CD4-positive, alpha-beta T cell (primary cell): ENCODE measurements at regions of chr1 and their contacts with region 1.

Region 1: DNA sequence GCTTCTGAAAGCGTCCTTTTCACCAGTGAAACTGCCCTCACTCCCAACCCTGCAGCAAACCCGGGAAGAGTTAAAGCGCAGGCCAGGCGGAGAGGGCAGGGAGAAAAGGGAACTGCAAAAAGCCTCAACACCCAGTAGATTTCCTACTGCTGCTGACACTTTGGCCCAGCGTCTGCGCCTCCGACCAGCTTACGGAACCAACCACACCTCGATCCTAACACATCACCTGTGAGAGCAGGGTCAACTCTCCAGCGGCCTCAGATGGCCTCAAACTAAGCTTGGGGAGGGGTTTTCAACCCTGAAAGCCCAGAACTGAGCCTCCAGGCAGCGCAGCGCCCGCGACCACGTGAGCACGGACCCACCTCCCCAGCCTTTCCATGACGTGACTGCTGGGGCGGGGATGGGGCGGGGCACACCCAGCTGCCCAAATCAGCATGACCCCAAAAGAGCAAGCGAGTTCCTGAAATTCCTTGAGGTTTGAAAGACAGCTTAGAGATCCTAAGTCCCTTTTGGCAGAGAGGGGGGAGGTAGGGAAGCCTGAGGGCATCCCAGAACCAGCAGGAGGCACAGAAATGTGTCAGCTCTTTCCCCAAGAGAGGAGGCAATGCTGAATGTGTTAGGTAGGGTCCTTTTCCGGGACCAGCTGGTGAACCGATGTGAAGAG is 59.1 kb downstream of the ITPKB start:
- DNase-seq: peak; percentile 44 to 88 (median 74)
- ATAC-seq: peak; percentile 15
- H3K4me3 ChIP-seq: peak overlapping the region; percentile 41
- H3K4me3 Mint-ChIP-seq: peak overlapping the region; percentile 87
- H3K27ac ChIP-seq: peak overlapping the region; percentile 86 to 93
- H3K27ac Mint-ChIP-seq: peak overlapping the region; percentile 98
- H3K4me1 ChIP-seq: peaks cover 99% of the 10 kb centered on the region
- H3K4me1 Mint-ChIP-seq: peaks cover 100% of the 10 kb centered on the region
- H3K27me3 ChIP-seq: no peaks in the 10 kb centered on the region
- H3K27me3 Mint-ChIP-seq: no peaks in the 10 kb centered on the region
- CTCF ChIP-seq: no peak

Region 2: GRCh38 chr1:226519716-226520598 is 160.0 kb before region 1 on chr1:
- CTCF ChIA-PET with region 1: no interaction called
- POLR2A ChIA-PET with region 1: no interaction called
- intact Hi-C with region 1: no loop called
- DNase-seq: no peak
- ATAC-seq: no peak
- H3K4me3 ChIP-seq: no peak overlapping the region
- H3K4me3 Mint-ChIP-seq: no peak overlapping the region
- H3K27ac ChIP-seq: no peak overlapping the region
- H3K27ac Mint-ChIP-seq: no peak overlapping the region
- H3K4me1 ChIP-seq: no peaks in the 10 kb centered on the region
- H3K4me1 Mint-ChIP-seq: no peaks in the 10 kb centered on the region
- H3K27me3 ChIP-seq: peaks cover 0 to 9% of the 10 kb centered on the region in 2 experiments
- H3K27me3 Mint-ChIP-seq: peaks cover 25% of the 10 kb centered on the region
- CTCF ChIP-seq: no peak

Region 3: GRCh38 chr1:226634166-226634588 is 45.8 kb before region 1 on chr1:
- CTCF ChIA-PET with region 1: interaction called, 13 read pairs
- POLR2A ChIA-PET with region 1: interaction called, 5 read pairs
- intact Hi-C with region 1: no loop called
- DNase-seq: peak; percentile 72 to 90 (median 78)
- ATAC-seq: peak; percentile 71
- H3K4me3 ChIP-seq: no peak overlapping the region
- H3K4me3 Mint-ChIP-seq: peak overlapping the region; percentile 52
- H3K27ac ChIP-seq: peak overlapping the region; percentile 22 to 54
- H3K27ac Mint-ChIP-seq: peak overlapping the region; percentile 87
- H3K4me1 ChIP-seq: peaks cover 55% of the 10 kb centered on the region
- H3K4me1 Mint-ChIP-seq: peaks cover 61% of the 10 kb centered on the region
- H3K27me3 ChIP-seq: no peaks in the 10 kb centered on the region
- H3K27me3 Mint-ChIP-seq: no peaks in the 10 kb centered on the region
- CTCF ChIP-seq: peak; percentile 95

Region 4: DNA sequence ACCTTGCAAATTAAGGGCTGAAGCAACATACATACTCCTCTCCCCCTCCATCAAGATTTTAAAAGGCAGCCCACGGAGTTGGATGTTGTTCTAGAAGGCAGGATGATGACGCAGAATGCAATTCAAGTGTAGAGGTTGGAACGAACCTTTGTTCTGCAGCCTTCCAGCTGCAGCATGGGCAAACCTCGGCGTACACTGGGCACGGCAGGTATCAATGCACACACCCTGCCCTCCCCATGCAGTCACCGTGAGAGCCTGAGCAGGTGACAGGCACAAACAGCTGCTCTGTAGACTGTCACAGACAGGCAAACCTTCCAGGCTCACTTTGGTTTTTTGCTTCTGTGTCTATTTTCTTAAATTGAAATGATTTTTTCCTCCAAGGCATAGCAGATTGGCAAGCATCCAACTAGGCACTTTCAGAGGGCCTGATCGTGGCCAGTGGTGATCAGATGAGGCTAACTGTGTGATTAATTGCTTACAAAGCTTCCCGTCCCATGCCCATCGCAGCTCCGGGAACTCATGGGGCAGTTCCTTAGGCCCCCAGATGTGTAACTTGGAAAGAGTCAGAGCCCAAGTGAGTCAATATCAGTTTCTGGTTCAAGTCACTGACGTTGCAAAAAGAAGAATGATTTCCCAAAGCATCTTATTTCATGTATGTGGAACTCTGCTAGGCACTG is 23.2 kb before region 1 on chr1:
- CTCF ChIA-PET with region 1: interaction called, 6 read pairs
- POLR2A ChIA-PET with region 1: interaction called, 40 read pairs
- intact Hi-C with region 1: loop called (anchors 1 to 5 kb)
- DNase-seq: peak in 13 of 14 experiments; percentile 33 to 90 (median 61)
- ATAC-seq: peak; percentile 77
- H3K4me3 ChIP-seq: no peak overlapping the region
- H3K4me3 Mint-ChIP-seq: peak overlapping the region; percentile 79
- H3K27ac ChIP-seq: peak overlapping the region in 1 of 2 donors; percentile 47
- H3K27ac Mint-ChIP-seq: no peak overlapping the region
- H3K4me1 ChIP-seq: no peaks in the 10 kb centered on the region
- H3K4me1 Mint-ChIP-seq: no peaks in the 10 kb centered on the region
- H3K27me3 ChIP-seq: no peaks in the 10 kb centered on the region
- H3K27me3 Mint-ChIP-seq: no peaks in the 10 kb centered on the region
- CTCF ChIP-seq: no peak

Region 5: GRCh38 chr1:226662642-226663326 is 17.2 kb before region 1 on chr1:
- CTCF ChIA-PET with region 1: interaction called, 10 read pairs
- POLR2A ChIA-PET with region 1: interaction called, 40 read pairs
- intact Hi-C with region 1: loop called in 1 of 2 experiments (anchors 1 kb)
- DNase-seq: peak; percentile 67 to 96 (median 81)
- ATAC-seq: peak; percentile 85
- H3K4me3 ChIP-seq: no peak overlapping the region
- H3K4me3 Mint-ChIP-seq: peak overlapping the region; percentile 71
- H3K27ac ChIP-seq: peak overlapping the region in 1 of 2 donors; percentile 47
- H3K27ac Mint-ChIP-seq: no peak overlapping the region
- H3K4me1 ChIP-seq: no peaks in the 10 kb centered on the region
- H3K4me1 Mint-ChIP-seq: no peaks in the 10 kb centered on the region
- H3K27me3 ChIP-seq: no peaks in the 10 kb centered on the region
- H3K27me3 Mint-ChIP-seq: no peaks in the 10 kb centered on the region
- CTCF ChIP-seq: no peak

Region 6: GRCh38 chr1:226702957-226703831 is 23.2 kb after region 1 on chr1:
- CTCF ChIA-PET with region 1: no interaction called
- POLR2A ChIA-PET with region 1: interaction called, 5 read pairs
- intact Hi-C with region 1: loop called in 1 of 2 experiments (anchors 1 kb)
- DNase-seq: peak; percentile 56 to 94 (median 75)
- ATAC-seq: peak; percentile 71
- H3K4me3 ChIP-seq: peak overlapping the region; percentile 65
- H3K4me3 Mint-ChIP-seq: peak overlapping the region; percentile 84
- H3K27ac ChIP-seq: peak overlapping the region; percentile 71 to 95
- H3K27ac Mint-ChIP-seq: peak overlapping the region; percentile 95
- H3K4me1 ChIP-seq: peaks cover 74% of the 10 kb centered on the region
- H3K4me1 Mint-ChIP-seq: peaks cover 91% of the 10 kb centered on the region
- H3K27me3 ChIP-seq: no peaks in the 10 kb centered on the region
- H3K27me3 Mint-ChIP-seq: no peaks in the 10 kb centered on the region
- CTCF ChIP-seq: no peak

Region 7: GRCh38 chr1:226708342-226708780 is 28.4 kb after region 1 on chr1:
- CTCF ChIA-PET with region 1: no interaction called
- POLR2A ChIA-PET with region 1: interaction called, 10 read pairs
- intact Hi-C with region 1: loop called in 1 of 2 experiments (anchors 1 kb)
- DNase-seq: peak in 2 of 14 experiments; percentile 51 to 58
- ATAC-seq: peak; percentile 13
- H3K4me3 ChIP-seq: no peak overlapping the region
- H3K4me3 Mint-ChIP-seq: peak overlapping the region; percentile 87
- H3K27ac ChIP-seq: peak overlapping the region; percentile 31 to 75
- H3K27ac Mint-ChIP-seq: peak overlapping the region; percentile 95
- H3K4me1 ChIP-seq: peaks cover 79% of the 10 kb centered on the region
- H3K4me1 Mint-ChIP-seq: peaks cover 95% of the 10 kb centered on the region
- H3K27me3 ChIP-seq: no peaks in the 10 kb centered on the region
- H3K27me3 Mint-ChIP-seq: peaks cover 11% of the 10 kb centered on the region
- CTCF ChIP-seq: peak; percentile 18